ENCODE measurements at regions of chr16 and their contacts with region 1.

Region 1: DNA sequence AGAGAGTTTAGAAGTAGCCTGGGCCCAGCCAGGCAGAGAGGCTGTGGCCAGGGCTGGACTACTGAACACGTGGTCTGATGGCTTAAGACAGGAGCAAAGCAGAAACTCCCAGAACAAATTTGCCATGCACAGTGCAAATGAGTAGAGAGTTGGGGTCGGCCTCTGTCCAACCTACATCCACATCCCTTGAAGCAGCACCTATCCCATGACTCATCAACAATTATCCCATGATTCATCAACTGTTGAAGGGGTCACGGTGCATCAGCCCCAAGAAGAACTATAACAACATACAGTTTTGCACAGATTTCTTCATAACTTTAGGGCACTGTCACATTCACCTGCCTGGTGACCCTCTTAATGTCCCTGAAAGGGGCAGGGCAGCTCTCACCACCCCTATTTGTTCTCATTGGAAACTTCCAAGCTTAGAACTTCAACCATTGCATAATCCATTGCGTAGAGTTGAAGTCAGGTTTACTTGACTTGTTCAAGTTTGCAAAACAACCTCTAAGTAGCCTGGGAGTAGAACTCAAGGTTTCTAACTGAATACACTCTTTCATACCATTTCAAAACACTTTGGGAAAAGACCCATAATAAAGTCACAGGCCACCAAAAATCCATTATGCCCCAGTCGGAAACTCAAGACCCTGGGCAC is 235.2 kb upstream of the CDH5 start:
- DNase-seq: no peak
- ATAC-seq: no peak
- H3K4me3 ChIP-seq: no peak overlapping the region
- H3K27ac ChIP-seq: no peak overlapping the region
- H3K4me1 ChIP-seq: 0 out of 3 replicates have a peak, but pooled peaks cover 2% of the 10 kb centered on the region
- CTCF ChIP-seq: no peak
- EP300 ChIP-seq: no peak
- POLR2A ChIP-seq: no peak
- RAD21 ChIP-seq: no peak

Region 2: DNA sequence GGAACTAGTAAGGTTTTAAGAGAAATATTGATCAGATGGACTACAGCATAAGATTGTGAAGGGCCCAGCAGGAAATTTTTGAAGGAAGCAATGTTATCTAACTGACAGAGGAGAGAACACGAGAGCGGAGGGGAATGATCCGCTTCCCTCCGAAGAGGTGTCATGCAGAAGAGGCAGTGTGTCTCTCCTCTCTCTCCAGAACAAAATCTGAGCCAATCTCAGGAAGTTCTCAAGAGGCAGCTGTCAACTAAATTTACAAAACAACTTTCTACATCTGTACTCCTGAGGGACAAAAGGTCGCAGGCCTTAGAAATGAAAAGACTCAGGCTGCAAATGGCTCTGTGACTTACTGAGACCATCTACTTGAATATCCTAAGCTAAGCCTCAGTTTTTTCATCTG is 10.6 kb after region 1 on chr16:
- CTCF ChIA-PET with region 1: no interaction called
- POLR2A ChIA-PET with region 1: no interaction called
- DNase-seq: no peak
- ATAC-seq: no peak
- H3K4me3 ChIP-seq: no peak overlapping the region
- H3K27ac ChIP-seq: no peak overlapping the region
- H3K4me1 ChIP-seq: no peaks in the 10 kb centered on the region
- CTCF ChIP-seq: no peak
- EP300 ChIP-seq: no peak
- POLR2A ChIP-seq: no peak
- RAD21 ChIP-seq: no peak

Region 3: GRCh38 chr16:66152823-66153393 is 21.6 kb after region 1 on chr16:
- CTCF ChIA-PET with region 1: no interaction called
- POLR2A ChIA-PET with region 1: interaction called, 10 read pairs
- DNase-seq: peak in 1 of 2 experiments; percentile 4
- ATAC-seq: peak in 1 of 2 experiments; percentile 38; a peak in 2 of 6 replicates
- H3K4me3 ChIP-seq: no peak overlapping the region
- H3K27ac ChIP-seq: no peak overlapping the region
- H3K4me1 ChIP-seq: no peaks in the 10 kb centered on the region
- CTCF ChIP-seq: no peak
- EP300 ChIP-seq: no peak
- POLR2A ChIP-seq: no peak
- RAD21 ChIP-seq: no peak

Region 4: GRCh38 chr16:66164581-66165247 is 33.4 kb after region 1 on chr16:
- CTCF ChIA-PET with region 1: no interaction called
- POLR2A ChIA-PET with region 1: no interaction called
- DNase-seq: no peak
- ATAC-seq: no peak
- H3K4me3 ChIP-seq: no peak overlapping the region
- H3K27ac ChIP-seq: no peak overlapping the region
- H3K4me1 ChIP-seq: no peaks in the 10 kb centered on the region
- CTCF ChIP-seq: no peak
- EP300 ChIP-seq: no peak
- POLR2A ChIP-seq: no peak
- RAD21 ChIP-seq: no peak

Measured in A549 (cell line).